ENCODE measurements at regions of chr7 and their contacts with region 1.

Region 1: GRCh38 chr7:86939197-86939814 is 120.1 kb downstream of the ELAPOR2 start:
- DNase-seq: peak in 6 of 7 donors; percentile 36 to 68 (median 60)
- H3K4me3 ChIP-seq: no peak overlapping the region
- H3K27ac ChIP-seq: no peak overlapping the region
- H3K4me1 ChIP-seq: no peaks in the 10 kb centered on the region
- H3K27me3 ChIP-seq: no peaks in the 10 kb centered on the region
- CTCF ChIP-seq: peak; percentile 47 to 85 (median 76)
- POLR2A ChIP-seq: no peak

Region 2: GRCh38 chr7:87003872-87004798 is 64.8 kb after region 1 on chr7:
- intact Hi-C with region 1: no loop called
- DNase-seq: peak in 3 of 7 donors; percentile 8 to 62 (median 21)
- H3K4me3 ChIP-seq: no peak overlapping the region
- H3K27ac ChIP-seq: peak overlapping the region in 1 of 5 donors; percentile 15
- H3K4me1 ChIP-seq: peaks cover 0 to 4% of the 10 kb centered on the region in 2 donors
- H3K27me3 ChIP-seq: no peaks in the 10 kb centered on the region
- CTCF ChIP-seq: no peak
- POLR2A ChIP-seq: no peak

Region 3: GRCh38 chr7:87148332-87148955 is 209.1 kb after region 1 on chr7:
- intact Hi-C with region 1: loop called (anchors 2 to 5 kb)
- DNase-seq: no peak
- H3K4me3 ChIP-seq: no peak overlapping the region
- H3K27ac ChIP-seq: no peak overlapping the region
- H3K4me1 ChIP-seq: peaks cover under 1 to 7% of the 10 kb centered on the region in 2 donors
- H3K27me3 ChIP-seq: no peaks in the 10 kb centered on the region
- CTCF ChIP-seq: peak; percentile 52 to 94 (median 66)
- POLR2A ChIP-seq: no peak